ENCODE measurements at regions of chr19 and their contacts with region 1.

Region 1: GRCh38 chr19:11125994-11126685 is 29.4 kb downstream of the SPC24 start:
- DNase-seq: no peak
- H3K4me3 ChIP-seq: no peak overlapping the region
- CTCF ChIP-seq: peak; percentile 78

Region 2: DNA sequence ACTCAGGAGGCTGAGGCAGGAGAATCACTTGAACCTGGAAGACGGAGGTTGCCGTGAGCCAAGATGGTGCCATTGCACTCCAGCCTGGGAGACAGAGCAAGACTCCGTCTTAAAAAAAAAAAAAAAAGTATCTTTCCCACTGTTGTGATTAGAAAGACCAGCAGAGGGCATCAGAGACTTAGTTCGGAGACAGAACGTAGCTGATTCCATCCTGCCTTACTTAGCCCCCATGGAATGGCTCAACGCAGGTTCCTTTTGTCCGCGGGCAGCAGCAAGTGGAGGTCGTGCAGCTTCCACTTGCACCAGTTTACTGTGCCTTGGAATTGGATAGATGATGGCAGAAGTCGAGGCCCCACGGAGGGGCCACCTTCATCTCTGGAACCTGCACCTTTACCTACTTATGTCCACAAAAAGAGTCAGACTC is 189.5 kb before region 1 on chr19:
- CTCF ChIA-PET with region 1: interaction called, 16 read pairs
- POLR2A ChIA-PET with region 1: no interaction called
- DNase-seq: peak; percentile 19
- H3K4me3 ChIP-seq: no peak overlapping the region
- CTCF ChIP-seq: peak; percentile 62

Region 3: DNA sequence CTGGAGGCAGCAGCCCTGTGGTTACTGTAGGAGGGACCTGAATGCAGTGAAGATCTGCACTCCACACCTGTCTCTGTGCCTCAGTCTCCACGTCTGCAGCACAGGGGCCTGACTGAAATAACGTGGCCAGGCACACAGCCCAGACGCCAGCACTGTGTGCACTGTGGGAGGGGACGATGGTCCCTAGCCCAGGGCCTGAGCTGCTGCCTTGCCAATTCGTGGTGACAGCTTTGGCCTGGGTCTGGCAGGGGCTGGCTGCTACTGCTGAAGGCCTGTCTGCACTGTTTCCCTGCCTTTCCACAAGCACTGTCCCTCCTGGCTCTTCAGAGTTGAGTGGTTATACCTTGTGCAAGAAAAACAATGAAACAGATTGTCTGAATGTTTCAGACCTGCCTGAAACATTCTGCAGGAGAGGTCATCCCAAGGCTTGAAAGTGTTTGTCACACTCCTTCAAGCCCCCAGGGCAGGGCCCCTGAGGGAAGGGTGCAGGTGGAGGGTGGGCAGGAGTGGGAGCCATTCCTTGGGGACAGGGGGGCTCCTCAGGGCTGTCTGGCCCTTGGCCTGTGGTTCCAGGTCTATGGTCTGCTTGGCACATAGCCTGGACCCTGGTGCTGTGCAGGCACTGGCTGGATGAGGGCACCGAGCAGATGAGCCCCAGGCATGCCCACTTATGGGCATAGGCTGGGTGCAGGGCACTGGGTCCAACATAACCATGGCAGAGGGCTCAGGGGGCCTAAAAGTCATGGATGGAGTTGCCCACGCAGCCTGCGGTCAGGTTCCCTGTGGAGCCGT is 75.6 kb before region 1 on chr19:
- CTCF ChIA-PET with region 1: no interaction called
- POLR2A ChIA-PET with region 1: no interaction called
- DNase-seq: no peak
- H3K4me3 ChIP-seq: no peak overlapping the region
- CTCF ChIP-seq: no peak

Region 4: GRCh38 chr19:11090054-11090900 is 35.9 kb before region 1 on chr19:
- CTCF ChIA-PET with region 1: interaction called, 42 read pairs
- POLR2A ChIA-PET with region 1: no interaction called
- DNase-seq: peak; percentile 57
- H3K4me3 ChIP-seq: peak overlapping the region; percentile 91
- CTCF ChIP-seq: no peak

Region 5: GRCh38 chr19:11106477-11106876 is 19.7 kb before region 1 on chr19:
- CTCF ChIA-PET with region 1: interaction called, 62 read pairs
- POLR2A ChIA-PET with region 1: no interaction called
- DNase-seq: no peak
- H3K4me3 ChIP-seq: no peak overlapping the region
- CTCF ChIP-seq: no peak

Region 6: GRCh38 chr19:11137542-11138384 is 11.6 kb after region 1 on chr19:
- CTCF ChIA-PET with region 1: interaction called, 50 read pairs
- POLR2A ChIA-PET with region 1: no interaction called
- DNase-seq: no peak
- H3K4me3 ChIP-seq: peak overlapping the region; percentile 31
- CTCF ChIP-seq: peak; percentile 84

Region 7: DNA sequence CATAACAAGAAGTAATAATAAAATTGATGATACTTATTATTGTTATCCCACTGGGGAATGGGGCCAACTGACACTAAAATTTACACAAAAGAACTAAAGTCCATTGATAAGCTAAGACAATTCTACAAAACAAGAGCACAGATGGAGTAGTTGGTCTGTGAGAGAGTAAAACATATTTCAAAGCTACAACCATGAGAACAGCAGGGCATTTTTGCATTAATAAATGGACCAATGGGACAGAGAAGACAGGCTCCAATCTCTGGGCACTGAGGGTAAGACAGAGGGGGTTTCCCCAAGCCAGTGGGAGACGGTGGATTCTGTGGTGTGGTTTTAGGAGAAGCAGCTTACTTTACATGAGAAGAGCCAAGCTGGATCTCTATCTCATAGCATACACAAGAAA is 56.9 kb after region 1 on chr19:
- CTCF ChIA-PET with region 1: interaction called, 12 read pairs
- POLR2A ChIA-PET with region 1: no interaction called
- DNase-seq: no peak
- H3K4me3 ChIP-seq: no peak overlapping the region
- CTCF ChIP-seq: no peak

Region 8: DNA sequence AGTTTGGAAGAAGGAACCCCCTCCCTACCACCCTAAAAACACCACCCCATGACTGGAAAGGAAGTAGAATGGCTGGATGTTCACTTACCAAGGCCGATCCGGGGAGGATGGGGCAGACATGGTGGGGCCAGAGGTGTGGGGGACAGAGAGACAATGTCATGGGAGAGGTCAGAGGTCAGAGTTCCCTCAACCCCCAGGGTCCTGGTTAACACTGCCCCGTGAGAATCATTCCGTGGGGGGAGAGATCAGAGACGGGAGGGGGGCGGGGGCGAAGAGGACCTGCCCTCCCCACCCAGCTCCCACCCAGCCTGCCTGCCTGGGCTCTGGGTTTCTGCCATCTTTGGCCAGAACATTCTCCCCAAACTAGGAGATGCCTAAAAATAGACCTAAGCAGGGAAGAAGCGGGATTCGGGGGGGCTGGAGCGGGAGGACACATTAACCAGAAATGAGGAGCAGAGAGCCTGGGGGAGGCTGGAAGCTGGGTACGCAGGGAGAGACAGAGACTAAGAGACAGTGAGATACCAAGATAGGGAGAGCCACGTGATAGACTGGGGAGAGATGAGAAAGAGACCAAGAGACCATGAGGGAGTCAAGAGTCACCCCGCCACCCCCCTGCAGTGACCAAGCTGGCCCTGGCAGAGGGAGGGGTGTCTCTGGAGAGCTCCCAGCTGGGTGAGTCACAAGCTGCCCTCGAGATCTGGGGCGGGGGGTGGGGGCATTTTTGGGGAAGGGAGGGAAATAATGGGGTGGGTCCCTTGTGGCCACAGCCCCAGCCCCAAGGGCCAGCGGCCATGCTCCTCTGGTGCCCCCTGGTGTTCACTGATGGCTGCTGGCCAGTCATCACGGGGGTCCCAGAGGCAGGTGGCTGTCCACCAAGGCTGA is 77.3 kb after region 1 on chr19:
- CTCF ChIA-PET with region 1: interaction called, 85 read pairs
- POLR2A ChIA-PET with region 1: no interaction called
- DNase-seq: peak; percentile 34
- H3K4me3 ChIP-seq: no peak overlapping the region
- CTCF ChIP-seq: peak; percentile 91

Region 9: GRCh38 chr19:11232556-11232955 is 106.4 kb after region 1 on chr19:
- CTCF ChIA-PET with region 1: no interaction called
- POLR2A ChIA-PET with region 1: no interaction called
- DNase-seq: no peak
- H3K4me3 ChIP-seq: no peak overlapping the region
- CTCF ChIP-seq: no peak

Measured in AG04449 (cell line).